Common myeloid progenitor, CD34-positive (primary cell): ENCODE measurements at regions of chr17 and their contacts with region 1.

Region 1: DNA sequence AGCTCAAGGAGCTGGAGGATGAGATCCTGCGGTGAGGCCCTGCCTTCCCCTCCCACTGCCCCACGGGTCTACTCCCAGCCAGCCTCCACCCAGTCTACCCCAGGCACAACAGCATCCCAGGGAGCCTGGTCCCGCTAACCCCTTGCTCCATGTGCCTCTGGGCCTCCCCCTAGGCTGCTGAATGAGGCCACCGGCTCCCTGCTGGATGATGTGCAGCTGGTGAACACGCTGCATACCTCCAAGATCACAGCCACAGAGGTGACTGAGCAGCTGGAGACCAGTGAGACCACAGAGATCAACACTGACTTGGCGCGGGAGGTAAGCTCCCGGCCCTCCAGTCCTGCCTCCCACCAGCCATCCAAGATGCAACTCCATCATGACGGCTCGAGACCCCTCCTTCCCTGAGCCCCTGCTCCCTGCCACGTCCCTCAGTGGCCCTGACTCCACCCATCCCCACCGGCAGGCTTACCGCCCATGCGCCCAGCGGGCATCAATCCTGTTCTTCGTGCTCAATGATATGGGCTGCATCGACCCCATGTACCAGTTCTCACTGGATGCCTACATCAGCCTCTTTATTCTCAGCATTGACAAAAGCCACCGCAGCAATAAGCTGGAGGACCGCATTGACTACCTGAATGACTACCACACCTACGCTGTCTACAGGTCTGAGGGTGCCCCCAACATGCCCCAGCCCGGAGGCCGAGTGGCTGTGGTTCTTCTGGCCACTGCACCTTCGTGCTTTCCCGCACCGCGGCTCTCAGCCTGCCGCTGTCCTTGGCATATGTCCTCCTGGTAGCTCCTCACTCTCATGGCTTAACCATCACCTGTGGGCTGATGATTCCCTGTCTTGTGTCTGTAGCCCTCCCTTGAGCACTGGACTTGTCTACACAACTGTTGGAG is 15.0 kb upstream of the KDM6B start:
- DNase-seq: no peak
- H3K4me3 ChIP-seq: no peak overlapping the region
- H3K27ac ChIP-seq: no peak overlapping the region
- H3K4me1 ChIP-seq: no peaks in the 10 kb centered on the region
- H3K27me3 ChIP-seq: no peaks in the 10 kb centered on the region

Region 2: DNA sequence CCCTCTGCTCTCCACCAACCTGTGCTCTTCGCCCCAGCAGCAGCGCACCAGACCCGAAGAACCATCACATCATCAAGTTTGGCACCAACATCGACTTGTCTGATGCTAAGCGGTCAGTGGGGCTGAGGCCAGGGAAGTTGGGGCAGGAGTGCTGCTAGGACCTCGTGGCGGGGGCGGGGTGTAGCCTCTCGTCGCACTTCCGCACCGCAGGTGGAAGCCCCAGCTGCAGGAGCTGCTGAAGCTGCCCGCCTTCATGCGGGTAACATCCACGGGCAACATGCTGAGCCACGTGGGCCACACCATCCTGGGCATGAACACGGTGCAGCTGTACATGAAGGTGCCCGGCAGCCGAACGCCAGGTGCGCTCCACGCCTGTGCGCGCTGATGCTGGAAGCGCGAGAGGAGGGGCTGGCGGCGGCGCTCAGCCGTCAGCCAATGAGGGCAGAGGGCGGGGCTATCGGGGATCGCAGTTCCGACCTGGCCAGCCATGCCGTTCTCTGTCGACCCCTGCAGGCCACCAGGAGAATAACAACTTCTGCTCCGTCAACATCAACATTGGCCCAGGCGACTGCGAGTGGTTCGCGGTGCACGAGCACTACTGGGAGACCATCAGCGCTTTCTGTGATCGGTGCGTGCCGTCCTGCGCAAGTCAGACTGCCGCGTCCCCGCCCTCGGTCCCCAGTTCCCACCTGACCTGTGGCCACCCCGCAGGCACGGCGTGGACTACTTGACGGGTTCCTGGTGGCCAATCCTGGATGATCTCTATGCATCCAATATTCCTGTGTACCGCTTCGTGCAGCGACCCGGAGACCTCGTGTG is 32.7 kb after region 1 on chr17:
- CTCF ChIA-PET with region 1: interaction called, 10 read pairs
- POLR2A ChIA-PET with region 1: interaction called, 3 read pairs
- DNase-seq: peak; percentile 91 to 96 (median 95)
- H3K4me3 ChIP-seq: peak overlapping the region in 1 of 7 experiments; percentile 16
- H3K27ac ChIP-seq: no peak overlapping the region
- H3K4me1 ChIP-seq: peaks cover 0 to 32% (median 23%) of the 10 kb centered on the region in 4 experiments
- H3K27me3 ChIP-seq: no peaks in the 10 kb centered on the region